BJ (cell line): ENCODE measurements at regions of chr16 and their contacts with region 1.

Region 1: DNA sequence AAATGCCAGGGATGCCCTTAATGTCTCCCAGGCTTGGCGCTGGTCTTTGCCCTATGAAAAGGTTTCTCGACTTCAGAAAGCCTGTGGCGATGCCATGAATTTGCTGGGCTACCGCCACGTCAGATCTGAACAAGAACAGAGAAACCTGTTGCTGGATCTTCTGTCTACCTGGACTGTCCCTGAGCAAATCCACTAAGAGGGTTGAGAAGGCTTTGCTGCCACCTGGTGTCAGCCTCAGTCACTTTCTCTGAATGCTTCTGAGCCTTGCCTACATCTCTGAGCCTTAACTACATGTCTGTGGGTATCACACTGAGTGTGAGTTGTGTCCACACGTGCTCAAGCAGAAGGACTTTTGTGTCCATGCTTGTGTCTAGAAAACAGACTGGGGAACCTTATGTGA is 11.4 kb downstream of the CHST4 start:
- DNase-seq: no peak
- H3K4me3 ChIP-seq: no peak overlapping the region
- H3K27me3 ChIP-seq: no peaks in the 10 kb centered on the region; the same call in 1 of the 2 replicates
- CTCF ChIP-seq: peak; percentile 68

Region 2: DNA sequence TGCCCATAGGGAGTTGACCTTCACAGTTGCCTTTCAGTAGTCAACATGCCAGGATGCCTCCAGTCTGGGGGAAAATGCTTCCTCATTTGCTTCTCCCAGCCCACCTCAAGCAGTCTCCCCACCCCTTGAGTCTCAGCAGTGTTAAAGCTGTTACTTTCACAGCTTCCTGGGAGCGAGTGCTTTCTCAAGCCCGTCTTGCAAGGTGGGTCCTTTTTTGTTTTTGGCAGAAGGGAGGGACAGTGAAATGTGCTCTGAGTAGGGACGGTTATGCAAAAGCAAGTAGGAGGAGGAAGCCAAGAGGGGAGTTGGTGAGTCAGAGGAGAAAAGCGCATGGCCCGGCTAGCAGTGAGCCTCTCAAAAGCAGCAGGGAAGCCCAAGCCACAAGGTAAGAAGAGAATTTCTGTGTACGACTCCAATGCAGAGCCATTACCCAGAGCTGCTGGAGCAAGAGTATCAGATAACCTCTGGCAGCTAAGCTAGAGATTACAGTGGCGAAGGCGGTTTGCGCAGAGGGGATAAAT is 11.5 kb before region 1 on chr16 and contains the start of gene CHST4:
- CTCF ChIA-PET with region 1: interaction called, 13 read pairs
- POLR2A ChIA-PET with region 1: no interaction called
- DNase-seq: peak; percentile 2
- H3K4me3 ChIP-seq: no peak within 1 kb of the TSS
- H3K27me3 ChIP-seq: no peaks in the 10 kb centered on the region
- CTCF ChIP-seq: no peak
- polyA plus RNA-seq, gene CHST4: not detected in 2 replicates

Region 3: DNA sequence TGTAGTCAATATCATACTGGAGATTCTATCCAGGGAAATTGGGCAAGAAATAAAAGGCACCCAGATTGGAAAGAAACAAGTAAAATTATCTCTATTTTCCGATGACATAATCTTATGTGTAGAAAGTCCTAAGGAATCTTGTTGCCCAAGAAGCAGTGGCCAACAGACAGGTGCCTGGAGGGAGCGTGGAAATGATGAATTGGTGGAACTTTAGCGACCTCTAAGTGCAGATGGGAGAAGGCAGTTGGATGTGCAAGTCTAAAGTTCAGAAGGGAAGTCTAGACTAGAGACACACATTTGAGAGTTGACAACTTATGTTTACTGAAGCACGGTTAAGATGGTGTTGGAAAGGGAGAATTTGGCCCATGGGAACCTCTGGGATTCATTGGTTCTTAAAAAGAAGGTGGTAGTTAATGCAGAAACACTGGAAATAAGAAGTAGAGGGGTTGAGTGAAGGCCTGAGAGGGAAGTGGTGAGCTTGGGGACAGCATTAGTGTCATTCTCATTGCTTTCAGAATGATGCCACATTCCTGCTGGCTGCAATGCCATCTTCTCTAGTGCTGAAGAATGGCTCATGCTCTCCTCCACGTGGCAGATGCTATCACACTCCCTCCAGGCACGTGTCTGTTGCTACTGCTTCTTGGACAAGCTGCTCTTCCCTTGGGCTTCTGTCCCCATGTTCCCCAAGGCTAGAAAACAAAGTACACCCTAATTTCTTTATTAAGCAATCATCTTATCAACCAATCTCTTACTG is 15.2 kb after region 1 on chr16:
- CTCF ChIA-PET with region 1: interaction called, 21 read pairs
- POLR2A ChIA-PET with region 1: no interaction called
- DNase-seq: no peak
- H3K4me3 ChIP-seq: no peak overlapping the region
- H3K27me3 ChIP-seq: no peaks in the 10 kb centered on the region
- CTCF ChIP-seq: no peak